Heart left ventricle (tissue), 16 donors: ENCODE measurements at regions of chr6 and their contacts with region 1.

Region 1: DNA sequence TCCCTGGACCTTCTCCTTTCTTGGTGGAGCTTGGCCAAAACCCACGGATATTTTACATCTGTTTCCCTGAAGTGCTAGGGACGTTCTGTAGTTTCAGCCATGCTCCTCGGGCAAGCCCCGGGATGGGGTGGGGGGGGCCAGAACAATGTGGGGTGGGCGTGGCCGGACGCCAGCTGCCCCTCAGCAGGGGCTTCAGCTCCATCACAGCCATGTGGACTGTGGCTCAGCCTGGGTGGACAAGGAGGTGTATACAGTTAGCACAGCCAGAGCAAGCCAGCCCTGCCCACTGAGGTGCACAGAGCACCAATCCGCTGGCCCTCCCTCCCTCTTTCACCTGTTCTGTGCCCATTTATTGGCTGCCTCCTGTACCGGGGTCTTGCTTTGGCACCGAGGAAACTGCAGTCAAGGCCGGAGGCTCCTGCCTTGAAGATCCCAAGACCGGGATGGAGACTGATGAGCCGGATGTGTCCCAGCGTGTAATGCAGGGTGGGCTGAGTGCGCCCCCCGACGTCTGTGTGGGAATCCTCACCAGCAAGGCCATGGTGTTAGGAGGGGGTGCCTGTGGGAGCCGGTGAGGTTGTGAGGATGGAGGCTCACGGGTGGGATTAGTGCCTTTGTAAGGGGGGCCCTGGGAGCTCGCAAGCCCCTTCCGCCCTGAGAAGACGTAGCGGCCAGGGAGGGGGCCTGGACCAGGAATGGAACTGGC is 28.0 kb downstream of the FRMD1 start:
- DNase-seq: peak in 1 of 5 donors; percentile 28
- ATAC-seq: no peak
- H3K4me3 ChIP-seq: no peak overlapping the region
- H3K27ac ChIP-seq: no peak overlapping the region
- H3K4me1 ChIP-seq: peaks cover 14 to 40% (median 25%) of the 10 kb centered on the region in 12 donors
- H3K27me3 ChIP-seq: no peaks in the 10 kb centered on the region
- CTCF ChIP-seq: peak in 4 of 12 donors; percentile 5 to 34 (median 20)
- POLR2A ChIP-seq: no peak

Region 2: DNA sequence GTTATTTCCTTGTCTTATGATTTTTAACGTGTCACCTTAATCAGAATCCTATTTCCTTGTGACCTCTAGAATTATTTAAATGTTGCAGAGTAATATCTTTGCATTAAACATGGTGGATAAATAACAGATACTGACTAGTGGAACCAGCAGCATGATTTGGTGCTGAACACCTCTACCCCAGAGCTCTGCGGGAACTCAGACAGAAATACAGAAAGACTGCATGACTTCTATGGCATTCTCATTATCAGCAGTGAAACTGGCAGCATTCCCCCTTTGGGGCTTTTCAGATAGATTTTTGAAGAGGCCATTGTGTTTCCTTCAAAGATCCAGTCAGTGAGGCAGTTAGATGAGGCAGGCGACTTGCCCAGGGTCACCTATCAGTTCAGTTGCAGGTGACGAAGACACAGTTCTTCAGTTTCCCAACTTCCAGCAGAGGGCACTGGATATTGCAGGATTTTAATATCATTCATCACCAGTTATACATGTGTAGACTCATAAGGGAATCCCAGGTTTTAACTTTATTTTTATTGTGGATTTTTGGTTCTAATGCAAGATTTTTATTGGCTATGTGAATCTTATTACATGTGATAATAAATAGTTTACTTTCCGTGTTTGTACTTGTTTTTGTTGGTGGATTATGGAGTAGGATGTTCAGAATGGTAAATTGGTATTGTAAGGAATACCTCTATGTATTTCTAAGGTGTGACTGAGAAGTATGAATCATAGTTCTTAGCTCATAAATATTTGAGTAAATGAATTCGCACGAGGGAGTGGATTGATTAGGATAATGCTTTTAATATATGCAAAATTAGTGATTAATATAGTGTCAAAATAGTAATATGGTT is 143.0 kb before region 1 on chr6:
- intact Hi-C with region 1: loop called in 6 of 10 experiments (anchors 5 to 10 kb)
- DNase-seq: no peak
- ATAC-seq: peak in 2 of 4 donors; percentile 61 to 64
- H3K4me3 ChIP-seq: peak overlapping the region in 1 of 12 donors; percentile 12
- H3K27ac ChIP-seq: peak overlapping the region in 1 of 12 donors; percentile 62
- H3K4me1 ChIP-seq: peaks cover 0 to 22% (median 9%) of the 10 kb centered on the region in 12 donors
- H3K27me3 ChIP-seq: no peaks in the 10 kb centered on the region
- CTCF ChIP-seq: peak; percentile 33 to 77 (median 62)
- POLR2A ChIP-seq: no peak

Region 3: DNA sequence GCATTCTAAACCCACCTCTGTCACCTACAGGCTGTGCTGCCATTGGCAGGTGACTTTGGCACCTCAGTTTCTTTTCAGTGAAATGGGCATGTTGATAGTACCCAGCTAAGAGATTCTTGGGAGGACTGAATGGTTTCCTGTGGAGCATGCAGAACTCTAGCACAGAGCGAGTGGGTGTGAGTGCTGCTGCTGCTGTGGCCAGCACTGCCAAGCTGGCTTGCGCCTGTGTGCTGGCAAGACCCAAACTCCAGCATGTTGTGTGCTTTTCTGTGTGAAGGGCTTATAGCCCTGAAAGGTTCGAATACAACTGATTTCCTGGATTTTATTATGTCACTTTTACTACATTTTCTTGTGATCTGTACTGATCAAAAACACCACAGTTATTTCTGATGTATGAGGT is 131.7 kb before region 1 on chr6:
- intact Hi-C with region 1: loop called in 2 of 10 experiments (anchors 5 to 10 kb)
- DNase-seq: no peak
- ATAC-seq: no peak
- H3K4me3 ChIP-seq: no peak overlapping the region
- H3K27ac ChIP-seq: no peak overlapping the region
- H3K4me1 ChIP-seq: no peaks in the 10 kb centered on the region
- H3K27me3 ChIP-seq: no peaks in the 10 kb centered on the region
- CTCF ChIP-seq: no peak
- POLR2A ChIP-seq: no peak

Region 4: GRCh38 chr6:167996424-167997199 is 54.4 kb before region 1 on chr6:
- intact Hi-C with region 1: no loop called
- DNase-seq: no peak
- ATAC-seq: no peak
- H3K4me3 ChIP-seq: peak overlapping the region in 1 of 12 donors; percentile 15
- H3K27ac ChIP-seq: no peak overlapping the region
- H3K4me1 ChIP-seq: peaks cover 0 to 15% (median 5%) of the 10 kb centered on the region in 12 donors
- H3K27me3 ChIP-seq: peaks cover 0 to 11% (median 0%) of the 10 kb centered on the region in 9 donors
- CTCF ChIP-seq: no peak
- POLR2A ChIP-seq: no peak

Region 5: DNA sequence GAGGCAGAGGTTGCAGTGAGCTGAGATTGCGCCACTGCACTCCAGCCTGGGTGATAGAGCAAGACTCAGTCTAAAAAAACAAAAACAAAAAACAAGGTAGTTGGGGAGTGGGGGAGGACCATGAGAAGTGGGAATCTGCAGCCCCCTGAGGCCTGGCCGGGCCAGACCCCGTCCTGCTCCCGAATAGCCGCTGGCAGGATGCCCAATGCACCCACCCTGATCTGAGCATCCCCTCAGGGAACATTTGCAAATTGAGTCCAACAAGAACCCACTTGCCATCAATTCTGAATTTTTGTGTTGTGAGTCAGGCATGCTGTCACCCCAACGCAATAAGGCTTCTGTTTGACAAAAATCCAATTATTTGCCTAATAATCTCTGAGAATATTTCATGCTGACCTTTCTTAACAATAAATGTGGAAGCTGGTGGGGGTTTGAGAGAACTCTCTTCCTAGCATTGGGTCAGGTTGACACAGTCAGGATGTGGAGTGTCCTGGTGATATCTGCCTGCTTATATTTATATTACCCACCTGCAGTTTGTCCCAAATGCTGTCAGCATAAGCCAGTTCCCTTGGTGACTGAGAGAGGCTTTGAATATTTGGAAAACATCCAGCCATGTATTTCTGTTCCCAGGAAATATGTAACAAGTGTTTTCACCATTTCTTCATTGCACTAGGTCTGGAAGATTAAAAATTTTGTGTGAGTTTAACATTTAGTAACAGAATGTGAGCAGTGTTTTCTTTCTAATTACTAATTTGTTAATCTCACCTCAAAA is 56.4 kb after region 1 on chr6:
- intact Hi-C with region 1: loop called in 1 of 10 experiments (anchors 5 kb)
- DNase-seq: peak in 2 of 5 donors; percentile 30 to 62
- ATAC-seq: peak in 3 of 4 donors; percentile 29 to 73 (median 60)
- H3K4me3 ChIP-seq: no peak overlapping the region
- H3K27ac ChIP-seq: no peak overlapping the region
- H3K4me1 ChIP-seq: peaks cover 0 to 15% (median 3%) of the 10 kb centered on the region in 12 donors
- H3K27me3 ChIP-seq: peaks cover 0 to 11% (median 0%) of the 10 kb centered on the region in 9 donors
- CTCF ChIP-seq: no peak
- POLR2A ChIP-seq: no peak

Region 6: GRCh38 chr6:168180548-168181011 is 129.5 kb after region 1 on chr6:
- intact Hi-C with region 1: no loop called
- DNase-seq: no peak
- ATAC-seq: no peak
- H3K4me3 ChIP-seq: no peak overlapping the region
- H3K27ac ChIP-seq: no peak overlapping the region
- H3K4me1 ChIP-seq: no peaks in the 10 kb centered on the region
- H3K27me3 ChIP-seq: peaks cover 0 to 4% (median 0%) of the 10 kb centered on the region in 9 donors
- CTCF ChIP-seq: no peak
- POLR2A ChIP-seq: no peak